K562 (cell line): ENCODE measurements at regions of chr1 and their contacts with region 1.

Region 1: GRCh38 chr1:247078261-247079140 is at the start of gene ZNF670:
- DNase-seq: peak; percentile 98 to 99 (median 98)
- ATAC-seq: peak; percentile 99
- H3K4me3 ChIP-seq: peak within 1 kb of the TSS; percentile 80
- H3K27ac ChIP-seq: peak within 1 kb of the TSS; percentile 85
- H3K4me1 ChIP-seq: peaks cover 8 to 11% of the 10 kb centered on the region in 2 experiments; a peak in 4 of 5 replicates
- H3K27me3 ChIP-seq: no peaks in the 10 kb centered on the region
- CTCF ChIP-seq: peak in 2 of 3 experiments; percentile 25 to 34; a peak in 1 of 6 replicates
- EP300 ChIP-seq: no peak
- POLR2A ChIP-seq: peak; percentile 97
- RAD21 ChIP-seq: peak in 1 of 2 experiments; percentile 51; a peak in 2 of 4 replicates
- polyA plus RNA-seq, gene ZNF670: 17.3 to 23.4 TPM

Region 2: GRCh38 chr1:246329900-246330299 is 748.6 kb before region 1 on chr1:
- CTCF ChIA-PET with region 1: no interaction called
- POLR2A ChIA-PET with region 1: no interaction called
- in situ Hi-C with region 1: no loop called
- intact Hi-C with region 1: no loop called
- DNase-seq: no peak
- ATAC-seq: no peak
- H3K4me3 ChIP-seq: no peak overlapping the region
- H3K27ac ChIP-seq: no peak overlapping the region
- H3K4me1 ChIP-seq: peaks cover 10 to 15% of the 10 kb centered on the region in 2 experiments
- H3K27me3 ChIP-seq: no peaks in the 10 kb centered on the region
- CTCF ChIP-seq: no peak
- EP300 ChIP-seq: no peak
- POLR2A ChIP-seq: no peak
- RAD21 ChIP-seq: no peak

Region 3: GRCh38 chr1:247007511-247008405 is 70.7 kb before region 1 on chr1 and contains the start of gene ZNF695:
- CTCF ChIA-PET with region 1: no interaction called
- POLR2A ChIA-PET with region 1: no interaction called
- in situ Hi-C with region 1: no loop called
- intact Hi-C with region 1: loop called (anchors 1 kb)
- DNase-seq: peak; percentile 97 to 98 (median 97)
- ATAC-seq: peak; percentile 100
- H3K4me3 ChIP-seq: peak within 1 kb of the TSS; percentile 92
- H3K27ac ChIP-seq: peak within 1 kb of the TSS; percentile 76
- H3K4me1 ChIP-seq: peaks cover 6 to 8% of the 10 kb centered on the region in 2 experiments; a peak in 2 of 5 replicates
- H3K27me3 ChIP-seq: no peaks in the 10 kb centered on the region
- CTCF ChIP-seq: peak in 1 of 3 experiments; percentile 2; a peak in 1 of 6 replicates
- EP300 ChIP-seq: no peak
- POLR2A ChIP-seq: peak; percentile 85
- RAD21 ChIP-seq: 0 out of 4 replicates have a peak, but pooled peaks of 1 of the 2 experiments have one; percentile 3
- polyA plus RNA-seq, gene ZNF695: 8.7 to 8.8 TPM

Region 4: GRCh38 chr1:247103859-247104591 is 25.5 kb after region 1 on chr1 and contains the start of gene ZNF669:
- CTCF ChIA-PET with region 1: no interaction called
- POLR2A ChIA-PET with region 1: no interaction called
- in situ Hi-C with region 1: no loop called
- intact Hi-C with region 1: loop called (anchors 2 kb)
- DNase-seq: peak; percentile 98 to 100 (median 99)
- ATAC-seq: peak; percentile 99
- H3K4me3 ChIP-seq: peak within 1 kb of the TSS; percentile 70
- H3K27ac ChIP-seq: peak within 1 kb of the TSS; percentile 88
- H3K4me1 ChIP-seq: peaks cover 9 to 11% of the 10 kb centered on the region in 2 experiments
- H3K27me3 ChIP-seq: no peaks in the 10 kb centered on the region
- CTCF ChIP-seq: no peak
- EP300 ChIP-seq: peak; percentile 72
- POLR2A ChIP-seq: peak; percentile 96
- RAD21 ChIP-seq: no peak
- polyA plus RNA-seq, gene ZNF669: 5.3 to 6.3 TPM